Mammary epithelial cell (primary cell): ENCODE measurements at regions of chr4 and their contacts with region 1.

Region 1: DNA sequence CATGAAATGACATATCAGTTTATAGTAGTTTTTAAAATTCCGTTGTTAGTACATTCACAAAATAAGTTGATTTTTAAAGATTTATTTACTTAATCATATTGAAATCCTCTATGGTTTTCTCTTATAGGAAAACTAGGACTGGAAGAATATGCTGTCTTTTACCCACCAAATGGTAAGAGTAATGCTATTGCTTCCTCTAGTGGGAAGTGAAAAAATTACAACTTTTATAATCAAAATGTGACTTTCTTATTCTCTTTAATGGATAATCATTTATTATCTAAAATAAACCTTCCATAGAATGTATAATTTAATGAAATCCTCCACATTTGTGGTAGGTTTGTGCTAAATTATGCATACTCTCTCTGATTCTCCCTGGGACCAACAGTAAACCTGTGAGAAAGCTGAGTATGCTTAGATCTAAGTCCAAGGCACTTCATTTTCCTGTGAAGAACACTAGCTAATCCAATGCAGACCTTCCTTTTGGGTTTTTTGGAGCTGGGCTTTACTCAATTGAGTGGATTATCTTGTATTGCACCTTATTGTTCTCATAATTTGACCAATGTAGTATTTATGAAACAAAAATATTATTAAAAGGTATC is 136.2 kb downstream of the TBC1D19 start:
- DNase-seq: no peak
- H3K4me3 ChIP-seq: no peak overlapping the region
- H3K27ac ChIP-seq: no peak overlapping the region
- H3K4me1 ChIP-seq: peaks cover 10% of the 10 kb centered on the region
- H3K27me3 ChIP-seq: no peaks in the 10 kb centered on the region
- CTCF ChIP-seq: peak; percentile 57 to 72

Region 2: GRCh38 chr4:25993395-25994185 is 726.5 kb before region 1 on chr4:
- CTCF ChIA-PET with region 1: no interaction called
- dilution Hi-C with region 1: no loop called
- in situ Hi-C with region 1: loop called in 1 of 2 experiments (anchors 25 kb)
- intact Hi-C with region 1: no loop called
- DNase-seq: no peak
- H3K4me3 ChIP-seq: no peak overlapping the region
- H3K27ac ChIP-seq: no peak overlapping the region
- H3K4me1 ChIP-seq: no peaks in the 10 kb centered on the region
- H3K27me3 ChIP-seq: no peaks in the 10 kb centered on the region
- CTCF ChIP-seq: no peak

Region 3: GRCh38 chr4:26076000-26076587 is 644.0 kb before region 1 on chr4:
- CTCF ChIA-PET with region 1: no interaction called
- dilution Hi-C with region 1: no loop called
- in situ Hi-C with region 1: no loop called
- intact Hi-C with region 1: loop called (anchors 10 kb)
- DNase-seq: peak; percentile 62
- H3K4me3 ChIP-seq: no peak overlapping the region
- H3K27ac ChIP-seq: no peak overlapping the region
- H3K4me1 ChIP-seq: no peaks in the 10 kb centered on the region
- H3K27me3 ChIP-seq: peaks cover 2% of the 10 kb centered on the region
- CTCF ChIP-seq: no peak

Region 4: GRCh38 chr4:26330186-26330787 is 389.8 kb before region 1 on chr4:
- CTCF ChIA-PET with region 1: no interaction called
- dilution Hi-C with region 1: no loop called
- in situ Hi-C with region 1: no loop called
- intact Hi-C with region 1: loop called (anchors 5 kb)
- DNase-seq: peak; percentile 34
- H3K4me3 ChIP-seq: no peak overlapping the region
- H3K27ac ChIP-seq: no peak overlapping the region
- H3K4me1 ChIP-seq: peaks cover 14% of the 10 kb centered on the region
- H3K27me3 ChIP-seq: no peaks in the 10 kb centered on the region
- CTCF ChIP-seq: peak; percentile 55 to 64

Region 5: GRCh38 chr4:26459054-26459755 is 260.8 kb before region 1 on chr4:
- CTCF ChIA-PET with region 1: interaction called, 7 read pairs
- dilution Hi-C with region 1: no loop called
- in situ Hi-C with region 1: loop called (anchors 10 to 25 kb)
- intact Hi-C with region 1: loop called (anchors 1 kb)
- DNase-seq: peak; percentile 44
- H3K4me3 ChIP-seq: no peak overlapping the region
- H3K27ac ChIP-seq: no peak overlapping the region
- H3K4me1 ChIP-seq: no peaks in the 10 kb centered on the region
- H3K27me3 ChIP-seq: no peaks in the 10 kb centered on the region
- CTCF ChIP-seq: peak; percentile 62 to 69

Region 6: GRCh38 chr4:26583865-26584652 is 136.0 kb before region 1 on chr4 and contains the start of gene TBC1D19:
- CTCF ChIA-PET with region 1: no interaction called
- dilution Hi-C with region 1: no loop called
- in situ Hi-C with region 1: no loop called
- intact Hi-C with region 1: loop called (anchors 5 kb)
- DNase-seq: peak; percentile 88
- H3K4me3 ChIP-seq: peak within 1 kb of the TSS; percentile 80 to 87 (median 81)
- H3K27ac ChIP-seq: peak within 1 kb of the TSS; percentile 91
- H3K4me1 ChIP-seq: peaks cover 8% of the 10 kb centered on the region
- H3K27me3 ChIP-seq: no peaks in the 10 kb centered on the region
- CTCF ChIP-seq: no peak
- total RNA-seq, gene TBC1D19: 13.6 to 34.0 TPM

Region 7: GRCh38 chr4:27010334-27010940 is 290.4 kb after region 1 on chr4:
- CTCF ChIA-PET with region 1: no interaction called
- dilution Hi-C with region 1: no loop called
- in situ Hi-C with region 1: loop called in 1 of 2 experiments (anchors 25 kb)
- intact Hi-C with region 1: loop called (anchors 1 kb)
- DNase-seq: peak; percentile 32
- H3K4me3 ChIP-seq: no peak overlapping the region
- H3K27ac ChIP-seq: no peak overlapping the region
- H3K4me1 ChIP-seq: peaks cover 4% of the 10 kb centered on the region
- H3K27me3 ChIP-seq: no peaks in the 10 kb centered on the region
- CTCF ChIP-seq: peak; percentile 85 to 86